ENCODE measurements at regions of chr2 and their contacts with region 1.

Region 1: DNA sequence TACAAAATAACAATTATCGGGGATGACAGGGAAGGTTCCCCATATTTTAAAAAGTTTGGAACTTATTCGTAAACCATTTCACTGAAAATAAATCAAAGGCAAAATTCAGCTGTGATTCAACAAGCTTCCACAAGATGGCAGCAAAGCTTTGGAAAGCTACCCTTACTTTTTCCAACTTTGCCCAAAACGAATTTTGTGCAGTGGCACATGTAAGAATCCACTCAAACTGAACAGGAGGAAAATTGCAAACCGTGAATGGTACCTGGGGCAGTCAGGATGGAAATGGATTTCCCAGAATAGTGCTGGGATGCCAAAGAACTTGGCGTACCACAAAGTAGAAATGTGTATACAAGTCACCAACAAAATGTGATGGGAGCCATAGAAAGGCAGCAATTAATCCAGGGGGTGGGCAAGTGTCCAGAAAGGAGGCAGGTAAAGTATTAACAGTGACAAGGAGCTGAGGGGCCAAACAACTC is 10.7 kb downstream of the RPL31 start:
- DNase-seq: no peak
- ATAC-seq: no peak

Region 2: GRCh38 chr2:100964681-100965169 is 48.0 kb before region 1 on chr2:
- intact Hi-C with region 1: no loop called
- DNase-seq: no peak
- ATAC-seq: no peak

Region 3: GRCh38 chr2:101124643-101125366 is 112.1 kb after region 1 on chr2:
- intact Hi-C with region 1: no loop called
- DNase-seq: peak; percentile 74
- ATAC-seq: peak; percentile 65

Region 4: DNA sequence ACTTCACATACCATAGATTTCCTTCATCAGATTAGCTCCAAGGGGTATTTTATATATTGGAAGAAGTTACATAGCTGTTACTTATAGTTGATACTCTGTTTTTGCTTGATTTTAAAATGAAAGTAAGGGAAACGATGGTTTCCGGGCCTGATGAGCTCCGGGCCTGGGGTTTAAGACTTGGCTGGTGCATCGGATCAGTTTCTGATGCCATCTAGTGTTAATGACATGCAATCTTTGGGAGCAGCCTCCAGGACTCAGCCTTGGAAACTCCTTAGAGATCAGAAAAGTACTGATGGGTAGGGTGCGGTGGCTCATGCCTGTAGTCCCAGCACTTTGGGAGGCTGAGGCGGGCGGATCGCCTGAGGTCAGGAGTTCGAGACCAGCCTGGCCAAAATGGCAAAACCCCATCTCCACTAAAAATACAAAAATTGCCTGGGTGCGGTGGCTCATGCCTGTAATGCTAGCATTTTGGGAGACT is 192.8 kb after region 1 on chr2:
- intact Hi-C with region 1: loop called (anchors 2 kb)
- DNase-seq: no peak
- ATAC-seq: peak; percentile 87

Region 5: DNA sequence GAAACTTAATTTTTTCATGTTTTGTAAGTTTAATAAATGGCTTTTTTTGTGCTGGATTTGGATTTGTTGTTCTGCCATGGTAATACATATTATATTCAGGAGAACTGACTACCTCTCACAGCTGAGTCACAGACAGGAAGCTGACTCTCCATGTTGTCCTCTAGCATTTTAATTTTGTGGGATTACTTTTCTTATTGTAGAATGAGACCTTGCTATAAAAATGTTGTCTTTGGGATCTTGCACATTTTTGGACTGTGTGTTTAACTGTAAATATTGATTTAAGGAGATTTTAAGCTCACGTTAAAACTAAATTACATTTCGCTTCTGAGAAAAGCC is 733.6 kb after region 1 on chr2:
- intact Hi-C with region 1: no loop called
- DNase-seq: no peak
- ATAC-seq: no peak

Measured in Right ventricle myocardium inferior (tissue), 1 donor.